ENCODE measurements at regions of chr13 and their contacts with region 1.

Region 1: GRCh38 chr13:105543742-105544141 is 991.7 kb downstream of the EFNB2 start:
- DNase-seq: no peak
- ATAC-seq: no peak
- H3K4me3 ChIP-seq: no peak overlapping the region
- H3K4me3 Mint-ChIP-seq: no peak overlapping the region
- H3K27ac ChIP-seq: no peak overlapping the region
- H3K27ac Mint-ChIP-seq: no peak overlapping the region
- H3K4me1 ChIP-seq: no peaks in the 10 kb centered on the region
- H3K4me1 Mint-ChIP-seq: no peaks in the 10 kb centered on the region
- H3K27me3 ChIP-seq: no peaks in the 10 kb centered on the region
- H3K27me3 Mint-ChIP-seq: no peaks in the 10 kb centered on the region
- CTCF ChIP-seq: no peak

Region 2: GRCh38 chr13:104608331-104608730 is 935.4 kb before region 1 on chr13:
- intact Hi-C with region 1: no loop called
- DNase-seq: no peak
- ATAC-seq: no peak
- H3K4me3 ChIP-seq: no peak overlapping the region
- H3K4me3 Mint-ChIP-seq: no peak overlapping the region
- H3K27ac ChIP-seq: no peak overlapping the region
- H3K27ac Mint-ChIP-seq: no peak overlapping the region
- H3K4me1 ChIP-seq: no peaks in the 10 kb centered on the region
- H3K4me1 Mint-ChIP-seq: no peaks in the 10 kb centered on the region
- H3K27me3 ChIP-seq: no peaks in the 10 kb centered on the region
- H3K27me3 Mint-ChIP-seq: no peaks in the 10 kb centered on the region
- CTCF ChIP-seq: no peak

Region 3: GRCh38 chr13:106104281-106104901 is 560.6 kb after region 1 on chr13:
- intact Hi-C with region 1: no loop called
- DNase-seq: no peak
- ATAC-seq: no peak
- H3K4me3 ChIP-seq: no peak overlapping the region
- H3K4me3 Mint-ChIP-seq: no peak overlapping the region
- H3K27ac ChIP-seq: no peak overlapping the region
- H3K27ac Mint-ChIP-seq: no peak overlapping the region
- H3K4me1 ChIP-seq: no peaks in the 10 kb centered on the region
- H3K4me1 Mint-ChIP-seq: no peaks in the 10 kb centered on the region
- H3K27me3 ChIP-seq: no peaks in the 10 kb centered on the region
- H3K27me3 Mint-ChIP-seq: no peaks in the 10 kb centered on the region
- CTCF ChIP-seq: no peak

Region 4: GRCh38 chr13:106350208-106350607 is 806.5 kb after region 1 on chr13:
- intact Hi-C with region 1: loop called (anchors 5 kb)
- DNase-seq: no peak
- ATAC-seq: no peak
- H3K4me3 ChIP-seq: no peak overlapping the region
- H3K4me3 Mint-ChIP-seq: no peak overlapping the region
- H3K27ac ChIP-seq: no peak overlapping the region
- H3K27ac Mint-ChIP-seq: no peak overlapping the region
- H3K4me1 ChIP-seq: no peaks in the 10 kb centered on the region
- H3K4me1 Mint-ChIP-seq: no peaks in the 10 kb centered on the region
- H3K27me3 ChIP-seq: peaks cover 24% of the 10 kb centered on the region
- H3K27me3 Mint-ChIP-seq: peaks cover 5 to 16% of the 10 kb centered on the region in 2 donors
- CTCF ChIP-seq: no peak